HEK293 (cell line): ENCODE measurements at regions of chr17 and their contacts with region 1.

Region 1: GRCh38 chr17:48816774-48817590 is at the start of gene TTLL6:
- H3K4me3 ChIP-seq: peak within 1 kb of the TSS; percentile 43
- H3K27ac ChIP-seq: no peak within 1 kb of the TSS; the same call in 1 of the 2 replicates
- H3K4me1 ChIP-seq: peaks cover 4% of the 10 kb centered on the region
- CTCF ChIP-seq: peak; percentile 44; the same call in 1 of the 2 replicates

Region 2: DNA sequence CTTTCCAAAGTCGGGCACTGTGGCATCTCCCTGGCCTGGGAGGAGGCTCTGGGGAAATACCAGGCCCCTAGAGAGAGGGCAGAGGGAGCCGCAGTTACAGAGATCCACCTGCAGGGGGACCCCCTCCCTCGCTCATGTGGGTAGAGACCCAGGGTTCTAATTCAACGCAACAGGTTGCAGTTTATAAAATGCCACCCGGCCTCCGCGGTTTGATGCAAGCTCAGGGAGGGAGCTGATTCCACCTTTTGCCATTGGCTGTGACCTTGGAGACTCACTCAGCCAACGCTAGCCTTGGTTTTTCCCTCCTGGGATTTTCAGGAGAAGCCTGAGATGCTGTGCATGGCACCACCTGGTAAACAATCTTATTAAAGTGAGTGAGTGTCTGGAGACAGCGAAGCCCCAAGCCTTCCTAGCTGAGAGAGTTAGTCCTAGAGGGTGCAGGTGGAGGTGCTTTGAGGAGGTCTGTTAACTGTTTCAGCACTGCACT is 12.0 kb before region 1 on chr17:
- CTCF ChIA-PET with region 1: interaction called, 83 read pairs
- POLR2A ChIA-PET with region 1: no interaction called
- H3K4me3 ChIP-seq: no peak overlapping the region
- H3K27ac ChIP-seq: no peak overlapping the region
- H3K4me1 ChIP-seq: peaks cover 4% of the 10 kb centered on the region
- CTCF ChIP-seq: peak; percentile 76

Region 3: GRCh38 chr17:48830840-48831548 is 14.0 kb after region 1 on chr17 and contains the start of gene CALCOCO2:
- CTCF ChIA-PET with region 1: interaction called, 11 read pairs
- POLR2A ChIA-PET with region 1: interaction called, 8 read pairs
- H3K4me3 ChIP-seq: peak within 1 kb of the TSS; percentile 74
- H3K27ac ChIP-seq: peak within 1 kb of the TSS; percentile 56; the same call in 1 of the 2 replicates
- H3K4me1 ChIP-seq: no peaks in the 10 kb centered on the region
- CTCF ChIP-seq: peak; percentile 85

Region 4: DNA sequence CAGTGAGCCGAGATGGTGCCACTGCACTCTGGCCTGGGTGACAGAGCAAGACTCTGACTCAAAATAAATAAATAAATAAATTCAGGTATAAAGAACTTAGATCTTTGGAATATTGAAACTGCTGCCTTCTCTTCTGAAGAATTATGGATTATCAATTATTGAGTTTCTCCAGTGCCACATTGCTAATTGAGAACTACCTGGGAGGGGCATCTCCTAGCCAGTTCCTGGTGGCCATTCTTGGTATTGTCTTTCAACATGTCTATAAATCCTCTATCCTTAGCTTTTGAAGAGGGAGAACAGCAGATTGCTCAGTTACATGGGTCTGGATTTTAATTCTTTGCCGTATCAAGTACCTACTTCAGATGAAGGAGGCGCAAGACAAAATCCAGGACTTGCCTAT is 43.1 kb after region 1 on chr17:
- CTCF ChIA-PET with region 1: interaction called, 11 read pairs
- POLR2A ChIA-PET with region 1: interaction called, 3 read pairs
- H3K4me3 ChIP-seq: no peak overlapping the region
- H3K27ac ChIP-seq: no peak overlapping the region
- H3K4me1 ChIP-seq: no peaks in the 10 kb centered on the region
- CTCF ChIP-seq: no peak

Region 5: GRCh38 chr17:48871551-48872351 is 54.8 kb after region 1 on chr17:
- CTCF ChIA-PET with region 1: interaction called, 387 read pairs
- POLR2A ChIA-PET with region 1: no interaction called
- H3K4me3 ChIP-seq: no peak overlapping the region
- H3K27ac ChIP-seq: no peak overlapping the region
- H3K4me1 ChIP-seq: no peaks in the 10 kb centered on the region
- CTCF ChIP-seq: no peak